Aorta (tissue), 5 donors: ENCODE measurements at regions of chr19 and their contacts with region 1.

Region 1: GRCh38 chr19:38634757-38635482 is 12.5 kb upstream of the ACTN4 start:
- DNase-seq: peak; percentile 79 to 94
- ATAC-seq: peak; percentile 80
- H3K4me3 ChIP-seq: no peak overlapping the region
- H3K27ac ChIP-seq: no peak overlapping the region
- H3K4me1 ChIP-seq: no peaks in the 10 kb centered on the region
- H3K27me3 ChIP-seq: no peaks in the 10 kb centered on the region

Region 2: DNA sequence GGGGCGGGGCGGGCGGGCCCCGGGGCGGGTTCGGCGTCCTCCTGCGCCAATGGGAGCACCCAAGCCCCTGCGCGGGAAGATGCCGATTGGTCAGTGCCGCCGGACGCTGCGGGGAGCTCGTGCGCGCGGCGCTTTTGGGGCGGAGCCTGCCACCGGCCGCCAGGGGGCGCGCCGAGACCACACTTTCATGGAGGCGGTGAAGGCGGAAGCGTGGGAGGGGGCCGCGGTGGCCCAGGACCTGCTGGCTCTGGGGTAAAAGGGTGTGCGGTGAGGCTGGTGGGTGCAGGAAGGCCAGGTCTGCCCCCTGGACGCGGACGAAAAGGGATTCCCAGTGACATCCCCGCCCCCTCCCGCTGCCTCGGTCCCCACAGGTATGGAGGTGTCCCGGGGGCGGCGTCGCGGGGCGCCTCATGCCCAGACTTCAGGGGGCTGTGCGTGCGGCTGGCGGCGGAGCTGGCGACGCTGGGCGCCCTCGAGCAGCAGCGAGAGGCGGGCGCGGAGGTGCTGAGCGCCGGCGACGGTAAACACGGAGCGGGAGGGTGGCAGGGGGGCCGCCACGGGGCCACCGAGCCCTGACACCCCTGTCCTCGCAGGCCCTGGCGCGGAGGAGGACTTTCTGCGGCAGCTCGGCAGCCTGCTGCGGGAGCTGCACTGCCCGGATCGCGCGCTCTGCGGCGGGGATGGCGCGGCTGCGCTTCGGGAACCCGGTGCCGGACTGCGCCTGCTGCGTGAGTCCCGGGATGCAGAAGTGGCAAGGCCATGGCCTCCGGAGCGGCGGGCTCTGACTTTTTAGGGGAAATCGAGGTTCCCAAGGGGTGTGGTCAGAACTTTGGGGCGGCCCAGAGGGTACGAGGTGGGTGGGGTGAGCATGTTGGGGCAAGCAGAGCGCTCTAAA is 231.7 kb before region 1 on chr19 and contains the start of gene FAM98C:
- intact Hi-C with region 1: loop called (anchors 5 kb)
- DNase-seq: peak; percentile 98 to 99
- ATAC-seq: peak; percentile 99
- H3K4me3 ChIP-seq: peak within 1 kb of the TSS; percentile 71 to 76
- H3K27ac ChIP-seq: peak within 1 kb of the TSS in 1 of 2 donors; percentile 37
- H3K4me1 ChIP-seq: no peaks in the 10 kb centered on the region
- H3K27me3 ChIP-seq: no peaks in the 10 kb centered on the region
- total RNA-seq, gene FAM98C: 14.5 to 19.6 TPM

Region 3: GRCh38 chr19:38409631-38410133 is 225.2 kb before region 1 on chr19:
- intact Hi-C with region 1: loop called (anchors 5 kb)
- DNase-seq: no peak
- ATAC-seq: no peak
- H3K4me3 ChIP-seq: no peak overlapping the region
- H3K27ac ChIP-seq: no peak overlapping the region
- H3K4me1 ChIP-seq: no peaks in the 10 kb centered on the region
- H3K27me3 ChIP-seq: no peaks in the 10 kb centered on the region

Region 4: DNA sequence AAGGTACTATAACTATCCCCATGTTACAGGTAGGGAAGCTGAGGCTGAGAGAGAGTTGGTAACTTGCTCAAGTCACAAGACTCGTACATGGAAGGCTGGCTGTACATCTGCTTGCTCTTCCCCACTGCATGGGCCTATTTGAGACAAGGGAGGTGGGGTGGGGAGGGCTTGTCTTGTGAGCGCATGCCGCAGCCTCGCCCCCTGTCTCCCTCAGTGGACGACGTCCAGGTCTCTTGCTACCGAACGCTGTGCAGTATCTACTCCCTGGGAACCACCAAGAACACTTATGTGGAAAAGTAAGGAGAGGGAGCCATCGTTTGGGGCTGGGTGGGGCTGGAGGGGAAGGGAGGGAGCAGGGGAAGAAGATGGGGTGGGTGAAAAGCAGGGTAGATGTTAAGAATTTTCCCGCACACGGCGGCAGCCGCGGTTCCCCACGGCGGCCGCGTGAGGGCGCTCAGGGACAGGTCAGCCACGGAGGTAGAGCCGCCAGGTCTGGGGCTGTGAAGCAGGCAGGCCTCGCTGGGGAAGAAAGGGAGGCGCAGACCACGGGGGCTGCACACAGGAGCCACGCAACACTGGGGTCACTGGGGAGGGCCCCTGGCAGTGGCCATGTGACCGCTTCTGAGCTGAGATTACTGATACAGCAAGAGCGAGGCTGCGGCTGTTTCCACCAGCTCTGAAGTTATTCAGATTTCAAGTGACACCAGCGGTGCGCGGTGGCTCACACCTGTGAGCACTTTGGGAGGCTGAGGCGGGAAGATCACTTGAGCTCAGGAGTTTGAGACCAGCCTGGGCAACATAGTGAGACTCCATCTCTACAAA is 119.9 kb before region 1 on chr19:
- intact Hi-C with region 1: loop called (anchors 1 to 10 kb)
- DNase-seq: peak; percentile 73 to 91
- ATAC-seq: peak; percentile 82
- H3K4me3 ChIP-seq: no peak overlapping the region
- H3K27ac ChIP-seq: no peak overlapping the region
- H3K4me1 ChIP-seq: no peaks in the 10 kb centered on the region
- H3K27me3 ChIP-seq: peaks cover 0 to 2% of the 10 kb centered on the region in 2 donors

Region 5: GRCh38 chr19:38929929-38930775 is 295.2 kb after region 1 on chr19 and contains the start of gene SARS2:
- intact Hi-C with region 1: loop called in 1 of 2 experiments (anchors 10 kb)
- DNase-seq: peak; percentile 94 to 97
- ATAC-seq: peak; percentile 97
- H3K4me3 ChIP-seq: peak within 1 kb of the TSS; percentile 58 to 92
- H3K27ac ChIP-seq: peak within 1 kb of the TSS in 1 of 2 donors; percentile 69
- H3K4me1 ChIP-seq: no peaks in the 10 kb centered on the region
- H3K27me3 ChIP-seq: no peaks in the 10 kb centered on the region
- total RNA-seq, gene SARS2: 5.9 to 13.8 TPM